Activated CD8-positive, alpha-beta T cell treated with anti-CD3 and anti-CD28 coated beads, Interleukin-2, amount 10 ng/mL, durations not matched to agents 7 days and 5 days (primary cell): ENCODE measurements at regions of chr19 and their contacts with region 1.

Region 1: GRCh38 chr19:19488875-19489690 is 26.3 kb downstream of the TSSK6 start:
- DNase-seq: peak; percentile 98
- ATAC-seq: peak; percentile 91
- H3K4me3 Mint-ChIP-seq: peak overlapping the region; percentile 68
- H3K27ac Mint-ChIP-seq: peak overlapping the region; percentile 97
- H3K4me1 Mint-ChIP-seq: peaks cover 62% of the 10 kb centered on the region
- H3K27me3 Mint-ChIP-seq: no peaks in the 10 kb centered on the region

Region 2: GRCh38 chr19:19361075-19361594 is 127.9 kb before region 1 on chr19:
- CTCF ChIA-PET with region 1: interaction called, 162 read pairs
- POLR2A ChIA-PET with region 1: interaction called, 17 read pairs
- DNase-seq: peak; percentile 80
- ATAC-seq: peak; percentile 71
- H3K4me3 Mint-ChIP-seq: no peak overlapping the region
- H3K27ac Mint-ChIP-seq: peak overlapping the region; percentile 49
- H3K4me1 Mint-ChIP-seq: peaks cover 37% of the 10 kb centered on the region
- H3K27me3 Mint-ChIP-seq: no peaks in the 10 kb centered on the region

Region 3: GRCh38 chr19:19385108-19385899 is 103.8 kb before region 1 on chr19:
- CTCF ChIA-PET with region 1: interaction called, 24 read pairs
- POLR2A ChIA-PET with region 1: interaction called, 15 read pairs
- DNase-seq: peak; percentile 100
- ATAC-seq: peak; percentile 96
- H3K4me3 Mint-ChIP-seq: peak overlapping the region; percentile 80
- H3K27ac Mint-ChIP-seq: peak overlapping the region; percentile 92
- H3K4me1 Mint-ChIP-seq: peaks cover 45% of the 10 kb centered on the region
- H3K27me3 Mint-ChIP-seq: no peaks in the 10 kb centered on the region

Region 4: DNA sequence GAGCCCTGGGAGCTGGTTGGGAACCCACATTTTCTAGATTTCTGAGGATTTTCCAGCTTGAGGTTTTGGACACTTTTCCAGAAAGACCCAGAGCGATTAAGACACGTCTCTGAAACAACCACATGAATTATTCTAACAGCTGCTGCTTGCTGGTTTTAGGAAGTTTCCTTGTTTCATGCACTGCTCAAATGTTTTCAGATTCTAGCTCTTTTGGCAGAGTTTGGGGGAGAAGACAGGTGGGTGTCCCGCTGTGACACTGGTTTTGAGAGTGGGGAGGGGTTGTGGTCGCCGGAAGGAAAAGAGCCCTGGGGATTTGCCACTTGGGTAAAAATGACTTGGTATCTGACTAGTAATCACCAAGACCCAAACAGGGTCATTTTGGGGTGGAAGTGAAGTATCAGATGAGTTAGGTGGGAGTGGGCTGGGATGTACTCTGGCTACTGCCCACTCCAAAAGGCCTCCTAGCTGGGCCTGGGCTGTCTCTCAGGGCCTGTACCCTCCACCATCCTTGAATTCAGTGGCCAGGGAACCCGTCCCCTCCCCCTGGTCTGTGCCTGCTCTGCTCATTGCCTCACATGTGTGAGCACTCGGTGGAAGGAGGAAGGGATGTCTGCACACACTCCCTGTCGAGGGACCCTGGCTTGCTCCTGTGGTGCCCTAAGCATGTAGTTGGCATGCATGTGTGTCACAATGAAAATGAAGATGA is 70.4 kb before region 1 on chr19:
- CTCF ChIA-PET with region 1: interaction called, 11 read pairs
- POLR2A ChIA-PET with region 1: no interaction called
- DNase-seq: no peak
- ATAC-seq: peak; percentile 42
- H3K4me3 Mint-ChIP-seq: no peak overlapping the region
- H3K27ac Mint-ChIP-seq: peak overlapping the region; percentile 70
- H3K4me1 Mint-ChIP-seq: peaks cover 56% of the 10 kb centered on the region
- H3K27me3 Mint-ChIP-seq: no peaks in the 10 kb centered on the region

Region 5: DNA sequence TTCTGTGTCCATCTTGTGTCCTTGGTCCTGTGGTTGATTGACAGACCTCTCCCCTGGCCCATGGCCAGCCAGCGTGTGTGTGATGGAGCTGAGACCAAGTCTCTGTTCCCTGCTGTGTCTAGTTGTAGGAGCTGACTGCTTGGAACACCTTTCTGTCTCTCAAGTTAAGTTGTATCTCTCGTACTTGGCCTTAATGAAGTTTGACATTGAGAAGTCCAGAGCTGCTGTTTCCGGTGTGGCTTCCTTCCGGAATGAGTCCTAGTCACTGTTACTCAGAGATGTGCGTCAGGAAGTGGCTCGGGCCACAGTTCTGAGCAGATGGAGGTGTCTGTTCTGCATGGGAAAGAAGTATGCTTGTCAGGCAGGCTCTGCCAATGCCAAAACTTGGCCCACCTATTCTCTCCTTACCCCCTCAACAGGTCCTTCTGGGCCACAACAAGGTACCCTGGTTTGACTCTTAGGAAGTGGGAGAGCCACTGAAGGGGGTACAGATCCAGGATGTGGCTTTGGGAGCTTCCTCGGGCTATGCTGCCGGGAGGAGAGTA is 29.3 kb before region 1 on chr19:
- CTCF ChIA-PET with region 1: interaction called, 25 read pairs
- POLR2A ChIA-PET with region 1: interaction called, 16 read pairs
- DNase-seq: peak; percentile 82
- ATAC-seq: peak; percentile 61
- H3K4me3 Mint-ChIP-seq: peak overlapping the region; percentile 64
- H3K27ac Mint-ChIP-seq: peak overlapping the region; percentile 99
- H3K4me1 Mint-ChIP-seq: peaks cover 87% of the 10 kb centered on the region
- H3K27me3 Mint-ChIP-seq: no peaks in the 10 kb centered on the region